Natural killer cell (primary cell): ENCODE measurements at regions of chr13 and their contacts with region 1.

Region 1: DNA sequence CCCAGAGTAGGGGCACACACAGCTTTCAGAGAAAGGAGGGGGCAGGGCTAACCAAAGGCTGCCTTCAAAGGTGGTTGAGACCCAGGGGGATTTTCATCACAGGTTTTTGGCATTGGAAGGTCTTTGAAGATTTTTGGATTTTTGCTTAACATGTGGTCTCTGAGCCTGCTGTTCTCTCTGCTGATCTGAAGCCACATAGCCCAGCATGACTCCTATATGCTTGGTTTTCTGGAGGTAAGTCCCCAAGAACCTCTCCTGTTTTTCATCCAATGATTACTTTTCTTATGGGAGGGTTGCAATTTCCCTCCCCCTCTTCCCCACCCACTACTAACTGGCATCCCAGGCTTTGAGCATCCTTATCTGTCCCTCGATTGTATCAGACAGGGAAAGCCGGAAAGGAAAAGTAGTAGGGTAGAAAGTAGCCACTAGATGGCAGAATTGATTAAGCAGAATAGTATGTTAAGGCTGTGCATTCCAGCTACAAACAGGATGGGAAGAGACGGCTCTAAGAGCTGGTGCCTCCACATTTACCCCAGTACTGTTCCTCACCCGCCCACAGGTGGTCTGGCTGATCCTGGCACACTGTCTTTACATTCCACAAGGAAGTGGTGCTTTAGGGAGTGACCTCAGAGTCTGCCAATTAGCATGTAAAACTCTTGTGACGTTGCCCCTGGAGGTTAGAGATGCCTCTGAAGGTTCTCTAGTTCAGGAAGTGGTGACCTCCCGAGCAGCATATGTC is 218.9 kb upstream of the EDNRB start:
- DNase-seq: peak in 1 of 2 donors; percentile 60
- ATAC-seq: peak; percentile 63 to 80 (median 66)
- H3K4me3 ChIP-seq: no peak overlapping the region
- H3K4me3 Mint-ChIP-seq: peak overlapping the region; percentile 52
- H3K27ac ChIP-seq: no peak overlapping the region
- H3K27ac Mint-ChIP-seq: peak overlapping the region in 1 of 2 donors; percentile 36
- H3K4me1 ChIP-seq: peaks cover 5% of the 10 kb centered on the region
- H3K4me1 Mint-ChIP-seq: peaks cover 6 to 8% of the 10 kb centered on the region in 2 donors
- H3K27me3 ChIP-seq: no peaks in the 10 kb centered on the region
- H3K27me3 Mint-ChIP-seq: peaks cover 0 to under 1% of the 10 kb centered on the region in 2 donors
- CTCF ChIP-seq: peak; percentile 57

Region 2: GRCh38 chr13:77907666-77908341 is 229.8 kb before region 1 on chr13:
- intact Hi-C with region 1: no loop called
- DNase-seq: no peak
- ATAC-seq: no peak
- H3K4me3 ChIP-seq: no peak overlapping the region
- H3K4me3 Mint-ChIP-seq: no peak overlapping the region
- H3K27ac ChIP-seq: no peak overlapping the region
- H3K27ac Mint-ChIP-seq: no peak overlapping the region
- H3K4me1 ChIP-seq: no peaks in the 10 kb centered on the region
- H3K4me1 Mint-ChIP-seq: no peaks in the 10 kb centered on the region
- H3K27me3 ChIP-seq: no peaks in the 10 kb centered on the region
- H3K27me3 Mint-ChIP-seq: peaks cover 1 to 6% of the 10 kb centered on the region in 2 donors
- CTCF ChIP-seq: no peak

Region 3: GRCh38 chr13:78978381-78978998 is 840.9 kb after region 1 on chr13:
- intact Hi-C with region 1: loop called (anchors 1 kb)
- DNase-seq: peak in 1 of 2 donors; percentile 68
- ATAC-seq: peak; percentile 64 to 74 (median 68)
- H3K4me3 ChIP-seq: no peak overlapping the region
- H3K4me3 Mint-ChIP-seq: no peak overlapping the region
- H3K27ac ChIP-seq: no peak overlapping the region
- H3K27ac Mint-ChIP-seq: no peak overlapping the region
- H3K4me1 ChIP-seq: no peaks in the 10 kb centered on the region
- H3K4me1 Mint-ChIP-seq: no peaks in the 10 kb centered on the region
- H3K27me3 ChIP-seq: no peaks in the 10 kb centered on the region
- H3K27me3 Mint-ChIP-seq: peaks cover 6 to 11% of the 10 kb centered on the region in 2 donors
- CTCF ChIP-seq: peak; percentile 69

Region 4: DNA sequence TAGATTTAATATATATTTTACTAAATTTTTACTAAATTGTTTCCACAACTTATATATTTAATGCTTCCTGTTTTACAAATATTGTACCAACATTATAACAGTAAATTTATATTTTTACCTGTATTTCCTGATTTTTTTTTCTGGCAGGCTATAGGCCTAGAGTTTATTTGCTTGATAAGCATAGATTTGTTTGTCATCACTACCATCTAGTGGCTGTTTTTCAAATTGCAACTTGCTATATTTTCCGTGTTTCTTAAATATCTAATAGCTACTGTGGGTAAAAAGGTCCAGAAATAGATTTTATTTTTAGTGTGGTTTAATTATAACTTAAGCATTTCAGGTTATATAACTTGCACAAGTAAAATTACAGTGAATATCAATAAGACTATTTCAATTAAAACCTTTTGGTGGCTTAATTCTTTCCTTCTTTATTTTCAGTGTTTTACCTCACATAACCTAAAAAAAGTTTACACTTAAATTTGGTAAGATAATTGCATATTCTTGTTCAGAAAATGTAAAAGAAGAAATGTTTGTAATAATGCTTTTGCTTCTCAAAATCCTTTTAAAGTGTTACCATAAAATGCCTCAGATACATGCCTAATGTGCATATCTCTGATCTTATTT is 1404.0 kb after region 1 on chr13:
- intact Hi-C with region 1: loop called (anchors 5 kb)
- DNase-seq: peak in 1 of 2 donors; percentile 83
- ATAC-seq: peak; percentile 63 to 77 (median 76)
- H3K4me3 ChIP-seq: no peak overlapping the region
- H3K4me3 Mint-ChIP-seq: no peak overlapping the region
- H3K27ac ChIP-seq: no peak overlapping the region
- H3K27ac Mint-ChIP-seq: no peak overlapping the region
- H3K4me1 ChIP-seq: no peaks in the 10 kb centered on the region
- H3K4me1 Mint-ChIP-seq: no peaks in the 10 kb centered on the region
- H3K27me3 ChIP-seq: no peaks in the 10 kb centered on the region
- H3K27me3 Mint-ChIP-seq: no peaks in the 10 kb centered on the region
- CTCF ChIP-seq: peak; percentile 97